Activated CD8-positive, alpha-beta T cell treated with anti-CD3 and anti-CD28 coated beads, Interleukin-2, amount 10 ng/mL, durations not matched to agents 7 days and 5 days (primary cell): ENCODE measurements at regions of chr3 and their contacts with region 1.

Region 1: DNA sequence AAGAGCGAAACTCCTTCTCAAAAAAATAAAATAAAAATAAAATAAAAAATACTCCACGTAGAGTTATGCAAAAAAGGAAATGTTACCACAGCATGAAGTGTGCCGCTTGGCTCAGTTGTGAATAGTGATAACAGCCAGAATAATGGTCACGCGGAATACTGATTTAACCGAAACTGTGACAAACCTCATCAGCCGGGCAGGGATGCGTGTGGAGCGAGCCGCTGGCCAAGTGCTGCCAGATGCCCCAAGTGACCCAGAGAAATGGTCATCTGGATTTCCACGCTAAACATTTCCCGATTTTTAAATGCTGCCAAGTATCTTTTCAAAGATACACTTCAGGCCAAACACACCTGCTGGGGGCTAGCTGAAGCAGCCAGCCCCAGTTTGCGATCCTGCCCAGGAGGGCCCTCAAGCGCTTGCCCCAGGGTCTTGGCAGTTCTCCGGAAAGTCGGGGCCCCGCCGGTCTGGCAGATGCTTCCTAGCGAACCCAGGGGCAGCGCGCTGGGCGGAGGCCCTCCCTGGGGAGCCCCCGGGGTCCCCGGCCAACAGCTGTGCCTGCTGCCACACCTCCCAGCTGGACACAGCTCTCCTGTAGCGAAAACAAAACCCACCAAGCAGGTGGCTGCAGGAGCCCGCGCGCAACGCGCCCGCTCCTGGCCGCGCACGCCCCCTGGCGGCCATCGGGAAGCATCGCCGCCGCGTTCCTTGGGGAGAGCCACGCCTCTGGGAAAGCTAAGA is 35.1 kb downstream of the CMTM6 start:
- DNase-seq: peak; percentile 76
- ATAC-seq: peak; percentile 90
- H3K4me3 Mint-ChIP-seq: peak overlapping the region; percentile 17
- H3K27ac Mint-ChIP-seq: no peak overlapping the region
- H3K4me1 Mint-ChIP-seq: peaks cover 34% of the 10 kb centered on the region
- H3K27me3 Mint-ChIP-seq: no peaks in the 10 kb centered on the region

Region 2: DNA sequence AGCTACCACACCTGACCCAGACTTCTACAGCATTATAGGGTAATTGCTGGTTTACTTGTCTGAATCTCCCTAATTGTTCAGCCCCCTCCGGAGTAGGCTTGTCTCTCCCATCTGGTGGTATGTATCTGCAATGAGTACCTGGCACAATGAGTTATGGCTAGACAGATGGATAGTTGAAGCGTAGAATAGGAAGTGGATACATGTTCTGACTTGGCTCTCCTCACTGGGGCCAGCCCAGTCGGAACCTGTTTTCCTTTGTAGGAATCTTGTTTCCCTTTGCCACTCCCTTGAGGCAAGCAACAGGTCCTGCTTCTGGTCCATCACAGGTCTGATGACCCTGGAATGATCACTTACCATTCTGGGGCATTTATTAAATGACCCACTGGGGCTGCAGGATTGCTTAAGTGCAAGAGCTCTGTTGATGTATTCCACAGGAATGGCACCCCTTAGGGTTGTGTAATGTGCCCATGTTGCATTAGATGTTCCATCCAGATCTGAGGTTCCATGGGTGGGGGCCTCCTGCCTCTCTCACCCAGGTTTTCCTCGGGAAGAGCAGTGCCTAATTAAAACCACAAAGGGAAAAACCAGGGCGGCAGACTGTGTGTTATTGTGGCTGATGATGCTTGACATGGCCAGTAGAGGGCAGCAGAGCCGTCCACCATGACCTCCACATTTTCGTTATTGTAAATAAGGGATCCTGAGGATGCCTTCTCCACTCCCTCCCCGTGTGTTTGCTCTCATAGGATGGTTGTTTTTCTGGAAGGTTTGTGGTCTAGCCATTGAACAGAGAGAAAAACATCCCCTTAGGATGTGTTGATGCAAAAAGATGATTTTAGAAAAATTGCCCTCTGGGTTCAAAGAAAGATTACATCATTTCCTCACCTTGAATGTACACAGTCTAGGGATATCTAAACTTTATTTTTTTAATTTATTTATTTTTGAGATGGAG is 171.0 kb before region 1 on chr3:
- CTCF ChIA-PET with region 1: interaction called, 12 read pairs
- POLR2A ChIA-PET with region 1: no interaction called
- DNase-seq: peak; percentile 74
- ATAC-seq: peak; percentile 86
- H3K4me3 Mint-ChIP-seq: peak overlapping the region; percentile 35
- H3K27ac Mint-ChIP-seq: peak overlapping the region; percentile 74
- H3K4me1 Mint-ChIP-seq: peaks cover 19% of the 10 kb centered on the region
- H3K27me3 Mint-ChIP-seq: no peaks in the 10 kb centered on the region

Region 3: GRCh38 chr3:32383136-32383711 is 84.3 kb before region 1 on chr3:
- CTCF ChIA-PET with region 1: interaction called, 107 read pairs
- POLR2A ChIA-PET with region 1: no interaction called
- DNase-seq: no peak
- ATAC-seq: no peak
- H3K4me3 Mint-ChIP-seq: no peak overlapping the region
- H3K27ac Mint-ChIP-seq: no peak overlapping the region
- H3K4me1 Mint-ChIP-seq: no peaks in the 10 kb centered on the region
- H3K27me3 Mint-ChIP-seq: peaks cover 12% of the 10 kb centered on the region

Region 4: GRCh38 chr3:32401556-32402081 is 65.9 kb before region 1 on chr3:
- CTCF ChIA-PET with region 1: interaction called, 39 read pairs
- POLR2A ChIA-PET with region 1: no interaction called
- DNase-seq: peak; percentile 82
- ATAC-seq: peak; percentile 83
- H3K4me3 Mint-ChIP-seq: peak overlapping the region; percentile 85
- H3K27ac Mint-ChIP-seq: peak overlapping the region; percentile 98
- H3K4me1 Mint-ChIP-seq: peaks cover 68% of the 10 kb centered on the region
- H3K27me3 Mint-ChIP-seq: no peaks in the 10 kb centered on the region

Region 5: DNA sequence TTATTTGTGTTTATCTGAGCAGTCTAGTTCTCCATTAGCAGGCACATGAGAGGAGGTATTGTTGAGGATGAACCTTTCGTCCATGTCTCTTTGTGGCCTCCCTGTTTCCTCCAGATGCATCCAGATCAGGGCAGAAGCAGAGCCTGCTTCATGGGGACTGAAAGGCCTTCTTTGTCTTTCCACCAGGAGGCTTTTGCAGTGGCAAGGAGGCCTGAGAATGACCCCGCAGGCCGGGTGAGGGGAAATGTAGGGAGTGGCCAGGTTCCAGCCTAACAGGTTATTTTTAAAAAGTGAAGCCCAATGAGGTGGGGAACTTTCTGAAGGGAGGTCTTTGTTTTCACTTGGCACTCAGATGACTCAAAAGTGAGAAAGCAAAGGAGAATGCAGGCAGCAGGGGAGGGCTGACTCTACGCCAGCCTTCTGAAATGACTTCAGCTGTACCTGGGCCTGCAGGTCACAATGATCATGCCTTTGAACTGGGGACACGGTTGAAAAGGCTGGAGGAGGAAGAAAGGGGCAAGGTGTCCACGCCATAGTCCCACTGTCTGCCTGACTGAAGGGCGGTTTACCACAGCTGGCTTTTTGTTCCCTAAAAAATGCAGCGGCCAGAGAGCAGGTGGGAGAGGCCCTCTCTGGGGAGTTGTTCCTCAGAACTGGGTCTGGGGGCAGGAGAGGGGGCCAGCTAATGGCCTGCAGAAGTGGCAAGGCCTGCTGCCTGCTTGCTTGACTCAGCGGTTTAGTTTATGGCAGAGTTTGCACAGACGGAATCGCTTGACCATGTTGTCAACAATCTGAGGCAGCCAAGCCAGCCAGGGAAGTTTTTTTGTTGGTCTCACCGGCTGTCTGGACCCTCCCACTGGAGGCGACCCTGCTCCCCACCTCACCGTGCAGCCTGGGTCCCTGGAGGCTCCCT is 47.1 kb before region 1 on chr3:
- CTCF ChIA-PET with region 1: interaction called, 83 read pairs
- POLR2A ChIA-PET with region 1: interaction called, 3 read pairs
- DNase-seq: no peak
- ATAC-seq: peak; percentile 47
- H3K4me3 Mint-ChIP-seq: peak overlapping the region; percentile 60
- H3K27ac Mint-ChIP-seq: peak overlapping the region; percentile 85
- H3K4me1 Mint-ChIP-seq: peaks cover 89% of the 10 kb centered on the region
- H3K27me3 Mint-ChIP-seq: no peaks in the 10 kb centered on the region

Region 6: GRCh38 chr3:32438596-32439344 is 28.7 kb before region 1 on chr3:
- CTCF ChIA-PET with region 1: interaction called, 29 read pairs
- POLR2A ChIA-PET with region 1: interaction called, 5 read pairs
- DNase-seq: peak; percentile 21
- ATAC-seq: peak; percentile 41
- H3K4me3 Mint-ChIP-seq: no peak overlapping the region
- H3K27ac Mint-ChIP-seq: peak overlapping the region; percentile 63
- H3K4me1 Mint-ChIP-seq: peaks cover 59% of the 10 kb centered on the region
- H3K27me3 Mint-ChIP-seq: no peaks in the 10 kb centered on the region

Region 7: DNA sequence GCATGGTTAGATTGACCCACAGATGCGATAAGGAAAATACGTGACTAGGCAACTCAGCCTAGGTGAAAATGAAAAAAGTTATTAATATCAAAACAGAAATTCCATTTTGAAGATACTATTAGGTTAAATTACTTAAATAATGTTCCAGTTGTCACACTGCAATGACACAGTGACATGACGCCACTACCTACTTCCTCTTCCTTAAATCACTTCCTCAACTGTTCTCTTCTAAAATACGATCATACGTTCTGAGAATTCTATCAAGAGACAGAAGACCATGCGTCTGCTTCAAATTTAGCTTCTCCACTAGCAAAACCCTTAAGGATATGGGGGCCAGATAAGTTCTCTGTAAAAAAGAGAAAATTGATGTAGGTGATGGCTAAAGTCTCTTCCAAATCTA is 16.9 kb after region 1 on chr3:
- CTCF ChIA-PET with region 1: interaction called, 10 read pairs
- POLR2A ChIA-PET with region 1: no interaction called
- DNase-seq: no peak
- ATAC-seq: no peak
- H3K4me3 Mint-ChIP-seq: no peak overlapping the region
- H3K27ac Mint-ChIP-seq: no peak overlapping the region
- H3K4me1 Mint-ChIP-seq: peaks cover 13% of the 10 kb centered on the region
- H3K27me3 Mint-ChIP-seq: no peaks in the 10 kb centered on the region

Region 8: GRCh38 chr3:32542807-32543206 is 75.3 kb after region 1 on chr3:
- CTCF ChIA-PET with region 1: no interaction called
- POLR2A ChIA-PET with region 1: no interaction called
- DNase-seq: no peak
- ATAC-seq: no peak
- H3K4me3 Mint-ChIP-seq: no peak overlapping the region
- H3K27ac Mint-ChIP-seq: no peak overlapping the region
- H3K4me1 Mint-ChIP-seq: no peaks in the 10 kb centered on the region
- H3K27me3 Mint-ChIP-seq: no peaks in the 10 kb centered on the region